SK-N-SH (cell line): ENCODE measurements at regions of chr9 and their contacts with region 1.

Region 1: GRCh38 chr9:130433168-130433946 is 11.4 kb upstream of the ASS1 start:
- DNase-seq: peak; percentile 92
- H3K4me3 ChIP-seq: peak overlapping the region in 1 of 2 experiments; percentile 13; a peak in 1 of 4 replicates
- H3K27ac ChIP-seq: no peak overlapping the region
- H3K4me1 ChIP-seq: peaks cover 0 to 22% of the 10 kb centered on the region in 2 experiments; a peak in 1 of 4 replicates
- H3K27me3 ChIP-seq: no peaks in the 10 kb centered on the region
- CTCF ChIP-seq: peak; percentile 40
- EP300 ChIP-seq: no peak
- RAD21 ChIP-seq: no peak

Region 2: DNA sequence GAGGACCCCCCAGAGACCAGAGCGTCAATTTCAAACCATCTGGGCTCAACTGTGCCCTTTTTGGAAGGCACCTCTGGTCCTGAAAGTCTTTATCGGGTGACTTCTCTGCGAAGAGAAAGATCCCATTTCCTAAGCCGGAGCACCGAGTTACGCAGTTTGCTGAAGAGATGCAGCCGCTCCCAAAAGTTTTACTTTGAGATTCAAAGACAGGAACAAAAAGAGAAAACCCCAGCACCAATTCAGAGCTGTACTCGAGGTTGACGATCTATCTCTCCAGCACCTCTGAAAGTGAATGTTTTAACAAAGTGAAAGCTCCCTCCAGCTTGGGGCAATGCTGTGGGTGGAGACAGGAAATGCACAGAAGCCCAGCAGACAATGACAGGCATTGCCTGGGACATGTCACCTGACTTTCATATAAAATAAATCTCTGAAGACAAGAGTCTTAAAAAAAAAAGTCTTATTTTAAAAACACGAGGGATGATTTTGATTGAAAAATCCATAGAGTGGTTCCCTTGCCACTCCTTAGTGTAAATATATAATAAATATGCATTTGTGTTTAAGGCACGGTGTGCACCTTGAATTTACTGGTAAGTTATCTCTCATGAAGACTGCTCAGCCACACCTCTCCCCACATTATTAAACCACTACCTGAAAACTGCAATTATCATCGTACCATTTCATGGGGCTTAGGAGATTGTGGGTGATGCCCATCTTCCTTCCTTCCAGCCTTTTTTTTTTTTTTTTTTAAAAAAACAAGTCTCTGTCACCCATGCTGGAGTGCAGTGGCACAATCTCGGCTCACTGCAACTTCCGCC is 470.3 kb before region 1 on chr9:
- CTCF ChIA-PET with region 1: no interaction called
- POLR2A ChIA-PET with region 1: no interaction called
- DNase-seq: no peak
- H3K4me3 ChIP-seq: 0 out of 4 replicates have a peak overlapping the region, but pooled peaks of 1 of the 2 experiments have one; percentile 5
- H3K27ac ChIP-seq: peak overlapping the region in 1 of 2 experiments; percentile 7; a peak in 1 of 4 replicates
- H3K4me1 ChIP-seq: peaks cover 8 to 26% of the 10 kb centered on the region in 2 experiments; a peak in 3 of 4 replicates
- H3K27me3 ChIP-seq: no peaks in the 10 kb centered on the region
- CTCF ChIP-seq: no peak
- EP300 ChIP-seq: no peak
- RAD21 ChIP-seq: no peak

Region 3: GRCh38 chr9:130451509-130452388 is 18.4 kb after region 1 on chr9:
- CTCF ChIA-PET with region 1: interaction called, 13 read pairs
- POLR2A ChIA-PET with region 1: interaction called, 3 read pairs
- DNase-seq: peak; percentile 81
- H3K4me3 ChIP-seq: no peak overlapping the region
- H3K27ac ChIP-seq: peak overlapping the region in 1 of 2 experiments; percentile 96; a peak in 2 of 4 replicates
- H3K4me1 ChIP-seq: peaks cover 19 to 75% of the 10 kb centered on the region in 2 experiments; a peak in 3 of 4 replicates
- H3K27me3 ChIP-seq: no peaks in the 10 kb centered on the region
- CTCF ChIP-seq: peak; percentile 63
- EP300 ChIP-seq: no peak
- RAD21 ChIP-seq: no peak; the same call in 1 of the 2 replicates

Region 4: GRCh38 chr9:130578865-130579737 is 145.7 kb after region 1 on chr9 and contains the start of gene FUBP3:
- CTCF ChIA-PET with region 1: no interaction called
- POLR2A ChIA-PET with region 1: no interaction called
- DNase-seq: peak; percentile 99
- H3K4me3 ChIP-seq: peak within 1 kb of the TSS; percentile 77 to 97
- H3K27ac ChIP-seq: peak within 1 kb of the TSS; percentile 88 to 90
- H3K4me1 ChIP-seq: peaks cover 6 to 11% of the 10 kb centered on the region in 2 experiments; a peak in 2 of 4 replicates
- H3K27me3 ChIP-seq: no peaks in the 10 kb centered on the region
- CTCF ChIP-seq: no peak
- EP300 ChIP-seq: peak in 1 of 2 experiments; percentile 37; a peak in 1 of 4 replicates
- RAD21 ChIP-seq: no peak
- polyA plus RNA-seq, gene FUBP3: 55.1 and 58.3 TPM in 2 replicates